Activated CD4-positive, alpha-beta T cell treated with anti-CD3 and anti-CD28 coated beads for 36 hours (primary cell): ENCODE measurements at regions of chr20 and their contacts with region 1.

Region 1: DNA sequence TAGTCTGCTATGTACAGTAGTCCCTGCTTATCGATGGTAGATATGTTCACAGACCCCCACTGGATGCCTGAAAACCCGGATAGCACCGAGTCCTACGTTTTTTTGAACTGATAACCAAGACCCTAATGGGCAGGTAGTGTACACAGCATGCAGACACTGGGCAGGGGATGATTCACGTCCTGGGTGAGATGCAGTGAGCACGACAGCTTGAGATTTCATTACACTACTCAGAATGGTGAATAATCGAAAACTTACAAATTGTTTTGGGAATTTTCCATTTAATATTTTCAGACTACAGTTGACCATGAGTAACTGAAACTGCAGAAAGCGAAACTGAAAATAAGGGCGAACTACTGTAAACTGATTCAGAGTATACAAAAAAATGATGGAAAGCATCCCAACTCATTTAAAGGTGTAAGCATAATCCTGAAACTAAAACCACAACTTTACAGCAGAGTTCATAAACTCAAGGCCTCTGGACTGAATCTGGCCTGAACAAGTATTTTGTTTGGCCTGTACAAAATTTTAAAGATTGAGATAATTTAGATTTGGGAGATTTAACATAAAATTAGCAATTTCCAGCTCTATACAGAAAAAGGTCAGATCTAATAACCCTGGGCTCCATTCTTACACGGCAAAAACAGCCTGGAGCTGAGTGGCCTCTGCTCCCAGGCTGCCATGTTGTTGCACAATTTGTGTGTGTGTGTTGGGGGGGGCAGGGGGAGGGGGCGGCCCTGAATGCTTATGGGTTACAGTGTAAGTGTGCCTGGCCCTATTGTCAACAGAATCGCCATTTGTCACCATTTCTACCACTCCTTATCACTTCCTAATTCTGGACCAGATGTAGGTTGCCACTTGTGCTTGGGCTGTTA is 34.9 kb downstream of the RNF24 start:
- DNase-seq: peak; percentile 65
- ATAC-seq: peak; percentile 93
- H3K4me3 Mint-ChIP-seq: peak overlapping the region; percentile 24
- H3K27ac Mint-ChIP-seq: peak overlapping the region; percentile 83
- H3K4me1 Mint-ChIP-seq: peaks cover 21% of the 10 kb centered on the region
- H3K27me3 Mint-ChIP-seq: no peaks in the 10 kb centered on the region

Region 2: GRCh38 chr20:3543901-3544507 is 436.5 kb before region 1 on chr20:
- CTCF ChIA-PET with region 1: no interaction called
- POLR2A ChIA-PET with region 1: no interaction called
- intact Hi-C with region 1: no loop called
- DNase-seq: no peak
- ATAC-seq: no peak
- H3K4me3 Mint-ChIP-seq: no peak overlapping the region
- H3K27ac Mint-ChIP-seq: no peak overlapping the region
- H3K4me1 Mint-ChIP-seq: no peaks in the 10 kb centered on the region
- H3K27me3 Mint-ChIP-seq: no peaks in the 10 kb centered on the region

Region 3: DNA sequence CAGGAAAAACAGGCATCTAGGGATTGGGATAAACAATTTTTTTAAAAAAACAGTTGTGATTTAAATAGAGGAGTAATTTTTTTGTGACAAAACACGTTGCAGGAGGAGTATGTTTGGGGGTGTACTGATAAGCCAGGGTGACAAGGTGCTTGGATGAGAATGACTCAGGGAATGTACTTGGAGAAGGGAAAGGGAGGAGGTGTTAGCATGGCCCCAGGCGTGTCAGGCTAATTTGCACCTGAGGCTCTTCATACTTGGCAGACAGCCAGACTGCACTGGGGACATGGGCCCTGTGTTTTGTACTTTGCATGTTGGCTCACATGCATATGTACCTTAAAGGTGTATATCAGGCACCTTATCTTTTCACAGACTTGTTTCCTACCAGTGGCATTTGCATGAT is 68.5 kb before region 1 on chr20:
- CTCF ChIA-PET with region 1: interaction called, 4 read pairs
- POLR2A ChIA-PET with region 1: no interaction called
- intact Hi-C with region 1: loop called in 1 of 2 experiments (anchors 5 kb)
- DNase-seq: no peak
- ATAC-seq: no peak
- H3K4me3 Mint-ChIP-seq: no peak overlapping the region
- H3K27ac Mint-ChIP-seq: peak overlapping the region; percentile 2
- H3K4me1 Mint-ChIP-seq: peaks cover 45% of the 10 kb centered on the region
- H3K27me3 Mint-ChIP-seq: no peaks in the 10 kb centered on the region

Region 4: DNA sequence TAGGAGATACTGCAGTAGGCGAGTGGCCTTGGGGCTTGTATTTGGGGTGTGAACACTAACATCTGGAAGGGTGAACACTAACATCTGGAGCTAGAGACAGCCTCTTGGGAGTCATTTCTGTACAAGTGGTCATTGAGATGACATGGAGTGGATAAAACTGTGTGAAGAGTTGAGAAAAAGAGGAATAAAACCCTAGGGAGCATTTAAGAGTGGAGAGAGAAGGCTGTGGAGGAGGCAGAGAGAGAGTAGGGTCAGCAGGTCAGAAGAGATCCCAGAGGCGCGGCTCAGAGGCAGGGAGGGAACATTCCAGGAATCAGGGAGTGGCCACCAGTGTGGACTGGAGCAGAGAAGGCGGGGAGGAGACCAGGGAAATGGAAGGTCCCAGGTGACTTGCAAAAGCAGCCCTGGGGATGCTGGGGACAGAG is 236.9 kb after region 1 on chr20:
- CTCF ChIA-PET with region 1: no interaction called
- POLR2A ChIA-PET with region 1: no interaction called
- intact Hi-C with region 1: no loop called
- DNase-seq: no peak
- ATAC-seq: no peak
- H3K4me3 Mint-ChIP-seq: no peak overlapping the region
- H3K27ac Mint-ChIP-seq: no peak overlapping the region
- H3K4me1 Mint-ChIP-seq: peaks cover 9% of the 10 kb centered on the region
- H3K27me3 Mint-ChIP-seq: peaks cover 38% of the 10 kb centered on the region